ENCODE measurements at regions of chr22 and their contacts with region 1.

Region 1: GRCh38 chr22:29004647-29005371 is 56.8 kb downstream of the C22orf31 start:
- DNase-seq: peak; percentile 90
- ATAC-seq: peak; percentile 93
- H3K4me3 ChIP-seq: peak overlapping the region; percentile 0 to 64 (median 51); a peak in 5 of 6 replicates
- H3K27ac ChIP-seq: peak overlapping the region; percentile 89
- H3K4me1 ChIP-seq: peaks cover 97% of the 10 kb centered on the region
- H3K27me3 ChIP-seq: no peaks in the 10 kb centered on the region
- CTCF ChIP-seq: no peak
- EP300 ChIP-seq: peak in 1 of 2 experiments; percentile 71; a peak in 2 of 4 replicates
- POLR2A ChIP-seq: 0 out of 4 replicates have a peak, but pooled peaks of 1 of the 2 experiments have one; percentile 8
- RAD21 ChIP-seq: no peak

Region 2: DNA sequence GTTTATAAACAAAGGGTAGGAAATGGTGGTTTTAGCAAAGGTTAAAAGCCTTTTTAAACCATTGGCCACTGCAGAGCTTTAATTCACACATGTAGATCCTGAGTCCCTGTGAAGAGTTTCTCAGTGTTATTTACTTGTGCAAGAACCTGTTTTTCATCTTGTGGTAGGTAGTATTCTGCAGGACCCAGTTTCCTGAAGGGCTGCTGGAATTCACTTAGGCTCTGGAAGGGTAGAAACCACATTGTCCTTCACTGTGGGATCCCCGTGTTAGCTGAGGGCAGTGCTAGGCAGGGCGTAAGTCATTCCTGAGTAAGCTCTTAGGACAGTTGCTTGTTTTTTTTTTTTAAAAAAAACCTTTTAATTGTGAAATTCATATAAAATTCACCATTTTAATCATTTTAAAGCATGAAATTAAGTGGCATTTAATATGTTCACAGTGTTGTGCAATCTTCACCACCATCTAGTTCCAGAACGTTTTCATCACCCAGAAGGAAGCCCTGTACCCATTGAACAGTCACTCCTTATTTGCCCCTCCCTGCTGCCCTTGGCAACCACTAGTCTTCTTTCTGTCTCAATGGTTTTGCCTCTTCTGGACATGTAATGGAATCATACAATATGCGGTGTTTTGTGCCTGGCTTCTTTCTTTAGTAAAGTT is 20.9 kb before region 1 on chr22:
- CTCF ChIA-PET with region 1: no interaction called
- POLR2A ChIA-PET with region 1: interaction called, 32 read pairs
- in situ Hi-C with region 1: no loop called
- intact Hi-C with region 1: loop called (anchors 2 kb)
- DNase-seq: no peak
- ATAC-seq: no peak
- H3K4me3 ChIP-seq: no peak overlapping the region
- H3K27ac ChIP-seq: peak overlapping the region; percentile 87
- H3K4me1 ChIP-seq: peaks cover 99% of the 10 kb centered on the region
- H3K27me3 ChIP-seq: no peaks in the 10 kb centered on the region
- CTCF ChIP-seq: no peak
- EP300 ChIP-seq: no peak
- POLR2A ChIP-seq: no peak
- RAD21 ChIP-seq: no peak

Region 3: DNA sequence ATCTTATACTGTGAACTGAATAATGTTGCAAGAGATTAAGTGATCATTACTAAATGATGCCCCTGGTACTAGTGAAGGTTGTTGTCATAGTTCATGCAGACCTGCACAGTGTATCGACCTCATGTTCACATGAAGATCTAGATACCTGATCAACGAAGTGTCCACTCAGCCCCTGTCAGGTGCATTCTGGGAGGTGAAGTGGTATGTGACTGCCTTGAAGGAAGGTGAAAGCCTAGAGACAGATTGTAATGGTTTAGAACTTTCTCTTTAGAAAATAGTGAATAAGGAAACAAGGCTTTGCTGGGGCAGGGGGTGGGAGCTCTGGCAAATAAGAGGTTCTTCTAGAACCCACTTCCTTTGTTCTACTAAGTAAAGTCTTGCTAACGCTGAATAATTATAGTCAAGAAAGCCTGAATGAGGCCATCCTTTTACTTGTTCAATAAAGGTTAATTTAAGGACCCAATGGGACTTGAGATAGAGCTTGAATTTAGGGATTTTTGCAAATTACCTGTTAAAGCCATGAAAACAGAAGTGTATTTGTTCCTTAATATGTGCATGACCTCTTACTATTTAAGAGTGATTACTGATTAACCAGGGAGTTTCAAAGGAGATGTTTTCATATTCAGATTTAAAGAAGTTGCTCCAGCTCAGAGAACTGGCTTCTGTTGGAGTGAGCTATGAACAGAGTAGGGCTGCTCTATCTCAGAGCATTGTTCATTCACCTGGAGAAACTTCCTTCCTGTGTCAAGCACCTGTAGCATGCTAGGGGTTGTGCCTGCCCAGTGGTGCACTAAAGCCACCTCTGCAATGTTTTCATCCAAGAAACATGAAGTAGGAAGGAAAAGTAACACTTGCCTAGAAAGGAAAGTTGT is 11.5 kb after region 1 on chr22:
- CTCF ChIA-PET with region 1: no interaction called
- POLR2A ChIA-PET with region 1: interaction called, 16 read pairs
- in situ Hi-C with region 1: no loop called
- intact Hi-C with region 1: no loop called
- DNase-seq: peak; percentile 48
- ATAC-seq: peak; percentile 67
- H3K4me3 ChIP-seq: no peak overlapping the region
- H3K27ac ChIP-seq: peak overlapping the region; percentile 43
- H3K4me1 ChIP-seq: peaks cover 100% of the 10 kb centered on the region
- H3K27me3 ChIP-seq: no peaks in the 10 kb centered on the region
- CTCF ChIP-seq: no peak
- EP300 ChIP-seq: no peak; a peak in 1 of 4 replicates
- POLR2A ChIP-seq: 0 out of 4 replicates have a peak, but pooled peaks of 1 of the 2 experiments have one; percentile 38
- RAD21 ChIP-seq: no peak

Region 4: GRCh38 chr22:29022101-29022817 is 17.4 kb after region 1 on chr22:
- CTCF ChIA-PET with region 1: no interaction called
- POLR2A ChIA-PET with region 1: interaction called, 20 read pairs
- in situ Hi-C with region 1: no loop called
- intact Hi-C with region 1: no loop called
- DNase-seq: peak; percentile 71
- ATAC-seq: peak; percentile 82
- H3K4me3 ChIP-seq: peak overlapping the region in 2 of 3 experiments; percentile 25 to 53; a peak in 3 of 6 replicates
- H3K27ac ChIP-seq: peak overlapping the region; percentile 69
- H3K4me1 ChIP-seq: peaks cover 87% of the 10 kb centered on the region
- H3K27me3 ChIP-seq: no peaks in the 10 kb centered on the region
- CTCF ChIP-seq: no peak
- EP300 ChIP-seq: peak in 1 of 2 experiments; percentile 24; a peak in 1 of 4 replicates
- POLR2A ChIP-seq: peak in 1 of 2 experiments; percentile 64; a peak in 2 of 4 replicates
- RAD21 ChIP-seq: no peak

Measured in HepG2 (cell line).